ENCODE measurements at regions of chr1 and their contacts with region 1.

Region 1: GRCh38 chr1:33367485-33368405 is 46.8 kb upstream of the A3GALT2 start:
- DNase-seq: peak; percentile 95
- ATAC-seq: peak; percentile 79

Region 2: DNA sequence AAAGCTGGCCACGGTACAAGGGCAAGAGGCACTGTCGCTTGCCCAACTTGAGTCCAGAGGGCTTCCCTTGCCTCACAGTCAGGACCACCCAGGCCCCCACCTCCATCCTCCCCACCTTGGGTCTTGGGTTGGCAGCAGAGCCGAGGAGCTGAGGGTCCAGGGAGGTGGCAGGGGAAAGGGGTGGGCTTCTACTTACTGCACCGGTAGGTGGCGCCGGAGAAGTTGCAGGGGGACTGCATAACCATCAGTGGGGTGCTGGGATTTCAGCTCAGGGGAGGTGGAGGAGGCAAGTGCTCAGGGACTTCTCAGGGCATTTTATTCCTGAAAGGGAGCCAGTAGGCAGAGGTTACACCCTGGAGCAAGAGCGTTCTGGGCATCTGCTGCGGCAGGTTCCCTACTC is 229.9 kb before region 1 on chr1:
- intact Hi-C with region 1: loop called (anchors 10 kb)
- DNase-seq: peak; percentile 73
- ATAC-seq: peak; percentile 62

Region 3: GRCh38 chr1:33295450-33296081 is 72.2 kb before region 1 on chr1:
- intact Hi-C with region 1: loop called (anchors 2 kb)
- DNase-seq: peak; percentile 94
- ATAC-seq: peak; percentile 87

Measured in sciatic nerve (tissue), 2 donors.